Natural killer cell (primary cell): ENCODE measurements at regions of chr6 and their contacts with region 1.

Region 1: GRCh38 chr6:110958329-110959192 is at the start of gene GTF3C6:
- DNase-seq: peak; percentile 89 to 95
- ATAC-seq: peak; percentile 99 to 100 (median 99)
- H3K4me3 ChIP-seq: peak within 1 kb of the TSS; percentile 100
- H3K4me3 Mint-ChIP-seq: peak within 1 kb of the TSS; percentile 96
- H3K27ac ChIP-seq: peak within 1 kb of the TSS; percentile 91
- H3K27ac Mint-ChIP-seq: peak within 1 kb of the TSS; percentile 91 to 98
- H3K4me1 ChIP-seq: peaks cover 14% of the 10 kb centered on the region
- H3K4me1 Mint-ChIP-seq: peaks cover 16 to 21% of the 10 kb centered on the region in 2 donors
- H3K27me3 ChIP-seq: no peaks in the 10 kb centered on the region
- H3K27me3 Mint-ChIP-seq: peaks cover 0 to 3% of the 10 kb centered on the region in 2 donors
- CTCF ChIP-seq: no peak
- total RNA-seq, gene GTF3C6: 28.2 to 36.0 (median 33.8) TPM

Region 2: GRCh38 chr6:110873981-110874879 is 84.3 kb before region 1 on chr6 and contains the start of gene AMD1:
- intact Hi-C with region 1: loop called (anchors 1 kb)
- DNase-seq: peak; percentile 94 to 98
- ATAC-seq: peak; percentile 68 to 90 (median 80)
- H3K4me3 ChIP-seq: peak within 1 kb of the TSS; percentile 82
- H3K4me3 Mint-ChIP-seq: peak within 1 kb of the TSS; percentile 98
- H3K27ac ChIP-seq: peak within 1 kb of the TSS; percentile 87
- H3K27ac Mint-ChIP-seq: peak within 1 kb of the TSS; percentile 96 to 97
- H3K4me1 ChIP-seq: peaks cover 24% of the 10 kb centered on the region
- H3K4me1 Mint-ChIP-seq: peaks cover 34 to 43% of the 10 kb centered on the region in 2 donors
- H3K27me3 ChIP-seq: no peaks in the 10 kb centered on the region
- H3K27me3 Mint-ChIP-seq: no peaks in the 10 kb centered on the region
- CTCF ChIP-seq: no peak
- total RNA-seq, gene AMD1: 109 to 175 (median 113) TPM

Region 3: DNA sequence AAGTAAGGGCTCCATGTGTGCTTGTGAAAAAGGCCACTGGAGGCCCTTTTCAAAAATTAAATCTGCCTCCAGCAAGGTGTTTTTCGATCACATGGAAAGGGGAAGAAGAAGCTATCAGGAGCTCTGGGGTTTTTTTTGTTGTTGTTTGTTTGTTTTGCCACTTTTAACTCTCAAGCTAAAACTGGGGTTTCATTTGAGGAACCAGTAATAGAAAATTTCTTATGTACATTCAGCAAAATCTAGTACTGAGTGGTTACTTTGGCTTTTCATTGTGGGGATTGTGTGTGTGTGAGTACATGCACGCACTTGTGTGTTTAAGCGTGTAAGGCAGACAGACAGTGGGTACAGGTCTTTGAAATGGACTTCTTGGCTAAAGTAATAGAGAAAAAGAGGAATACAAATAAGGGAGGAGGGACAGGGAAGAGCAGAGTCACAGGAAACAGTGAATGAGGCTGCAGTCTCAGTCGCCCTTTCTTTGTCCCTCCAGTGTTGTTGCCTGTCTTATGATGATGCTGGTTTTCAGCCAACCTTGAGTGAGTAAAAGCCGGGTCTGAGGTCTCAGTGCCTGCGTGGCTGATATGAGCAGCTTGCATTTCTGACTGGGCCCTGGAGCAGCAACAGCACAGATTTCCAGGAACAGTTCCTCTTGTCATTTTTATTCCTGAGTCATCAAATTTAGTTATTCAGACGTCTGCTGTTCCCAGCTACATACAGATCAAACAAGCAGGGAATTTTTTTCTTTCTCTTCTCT is 154.9 kb after region 1 on chr6:
- intact Hi-C with region 1: no loop called
- DNase-seq: peak in 1 of 2 donors; percentile 42
- ATAC-seq: no peak
- H3K4me3 ChIP-seq: no peak overlapping the region
- H3K4me3 Mint-ChIP-seq: no peak overlapping the region
- H3K27ac ChIP-seq: no peak overlapping the region
- H3K27ac Mint-ChIP-seq: peak overlapping the region in 1 of 2 donors; percentile 42
- H3K4me1 ChIP-seq: no peaks in the 10 kb centered on the region
- H3K4me1 Mint-ChIP-seq: peaks cover 6 to 10% of the 10 kb centered on the region in 2 donors
- H3K27me3 ChIP-seq: no peaks in the 10 kb centered on the region
- H3K27me3 Mint-ChIP-seq: peaks cover 0 to 8% of the 10 kb centered on the region in 2 donors
- CTCF ChIP-seq: no peak